ENCODE measurements at regions of chr2 and their contacts with region 1.

Region 1: GRCh38 chr2:188997263-188997662 is 23.1 kb downstream of the COL3A1 start:
- DNase-seq: no peak

Region 2: DNA sequence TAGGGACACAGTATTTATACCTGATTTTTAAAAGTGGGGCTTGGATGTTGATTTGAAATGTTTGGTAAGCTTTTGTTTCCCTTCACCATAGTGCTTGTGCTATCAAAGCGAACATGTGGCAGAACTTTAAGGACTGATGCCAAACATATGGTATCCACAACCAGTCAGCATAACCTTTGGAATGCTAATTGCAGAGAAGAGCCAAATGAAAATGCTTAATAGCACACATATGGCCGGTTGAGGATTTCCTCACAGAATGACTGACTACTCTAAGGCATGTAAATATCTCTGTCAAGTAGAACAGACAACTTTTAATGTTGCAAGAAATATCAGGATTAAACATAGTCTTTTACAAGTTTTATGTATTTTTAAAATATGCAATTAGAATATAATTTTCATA is 144.0 kb before region 1 on chr2:
- intact Hi-C with region 1: no loop called
- DNase-seq: no peak

Region 3: DNA sequence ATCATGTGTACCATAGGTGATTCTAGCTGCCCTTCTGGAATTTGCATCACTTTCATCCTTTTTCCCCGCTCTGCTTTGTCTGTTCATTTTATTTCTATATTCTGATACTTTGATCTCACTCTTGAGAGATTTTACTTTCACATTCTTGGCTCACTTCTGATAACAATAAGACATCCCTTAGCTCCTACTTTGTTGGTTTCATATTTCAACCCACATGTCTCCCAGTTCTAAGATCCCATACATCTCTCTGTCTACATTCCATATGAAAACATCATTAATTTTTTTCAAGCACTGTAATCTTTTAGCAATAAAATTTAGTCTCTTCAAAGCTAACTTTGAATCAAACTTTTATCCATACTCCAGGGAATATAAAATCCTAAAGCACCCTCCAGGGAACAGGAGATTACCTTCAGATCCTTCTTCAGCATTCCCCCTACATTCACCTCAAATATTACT is 52.5 kb after region 1 on chr2:
- intact Hi-C with region 1: loop called in 1 of 2 experiments (anchors 10 kb)
- DNase-seq: no peak